ENCODE measurements at regions of chr9 and their contacts with region 1.

Region 1: DNA sequence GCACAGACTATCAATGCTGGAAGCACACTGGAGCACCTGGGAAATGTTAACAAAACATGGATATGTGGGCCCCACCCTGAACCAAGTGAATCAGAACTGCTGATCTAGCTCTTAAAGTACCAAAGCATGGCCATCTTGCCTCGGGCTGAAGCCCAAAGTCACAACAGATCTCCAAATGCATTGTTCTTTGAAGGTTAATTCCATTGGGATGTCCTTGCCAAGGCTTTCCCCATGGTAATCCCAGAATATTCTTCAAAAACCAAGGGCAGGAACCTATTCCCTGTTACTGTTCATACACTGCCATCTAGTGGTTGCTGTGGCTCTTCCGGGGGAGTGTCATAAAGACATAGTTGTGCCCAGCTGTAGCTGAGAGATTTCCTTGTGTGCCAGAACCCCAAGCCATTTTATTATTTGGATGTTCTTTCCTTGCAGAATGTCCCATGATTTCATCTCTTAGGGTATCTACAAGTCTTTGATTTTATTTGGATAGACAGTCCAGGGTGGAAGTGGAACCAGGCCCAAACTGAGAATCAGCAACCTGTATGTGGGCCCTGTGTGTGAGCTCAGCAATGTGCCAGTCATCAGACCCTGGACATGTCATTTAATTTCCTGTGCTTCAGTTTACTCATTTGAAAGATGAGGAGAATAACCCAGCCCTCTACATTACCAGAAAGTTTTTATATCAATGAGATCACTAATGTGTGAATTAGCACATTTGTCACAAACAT is 290.0 kb downstream of the ACTL7B start:
- DNase-seq: no peak

Region 2: GRCh38 chr9:107465467-107466451 is 1100.1 kb before region 1 on chr9:
- intact Hi-C with region 1: loop called (anchors 5 kb)
- DNase-seq: peak; percentile 88

Region 3: GRCh38 chr9:107484117-107484723 is 1081.6 kb before region 1 on chr9:
- intact Hi-C with region 1: loop called (anchors 5 kb)
- DNase-seq: no peak

Region 4: DNA sequence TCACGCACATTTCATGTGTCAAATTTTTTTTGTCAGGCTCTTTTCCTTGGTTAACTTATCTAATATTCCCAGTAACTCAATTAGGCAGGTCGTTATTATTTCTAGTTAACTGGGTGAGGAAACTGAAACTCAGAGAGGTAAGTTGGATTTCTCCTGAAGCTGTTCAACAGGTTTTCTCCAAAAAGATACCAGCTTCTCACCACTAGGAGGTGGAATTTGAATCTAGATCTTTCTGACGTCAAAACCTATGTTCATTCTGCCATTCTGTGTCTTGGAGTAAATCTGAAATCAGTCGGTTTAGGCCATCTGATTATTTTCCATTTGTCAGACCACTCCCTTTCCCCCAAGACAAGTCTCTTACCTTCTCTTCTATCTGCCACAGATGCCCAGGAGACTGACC is 282.9 kb before region 1 on chr9:
- intact Hi-C with region 1: loop called (anchors 10 kb)
- DNase-seq: no peak

Region 5: GRCh38 chr9:108535526-108535925 is 30.3 kb before region 1 on chr9:
- intact Hi-C with region 1: no loop called
- DNase-seq: no peak

Region 6: GRCh38 chr9:108761655-108762347 is 196.0 kb after region 1 on chr9:
- intact Hi-C with region 1: loop called (anchors 10 kb)
- DNase-seq: no peak